Activated CD4-positive, alpha-beta memory T cell treated with anti-CD3 and anti-CD28 coated beads for 36 hours (primary cell): ENCODE measurements at regions of chr3 and their contacts with region 1.

Region 1: DNA sequence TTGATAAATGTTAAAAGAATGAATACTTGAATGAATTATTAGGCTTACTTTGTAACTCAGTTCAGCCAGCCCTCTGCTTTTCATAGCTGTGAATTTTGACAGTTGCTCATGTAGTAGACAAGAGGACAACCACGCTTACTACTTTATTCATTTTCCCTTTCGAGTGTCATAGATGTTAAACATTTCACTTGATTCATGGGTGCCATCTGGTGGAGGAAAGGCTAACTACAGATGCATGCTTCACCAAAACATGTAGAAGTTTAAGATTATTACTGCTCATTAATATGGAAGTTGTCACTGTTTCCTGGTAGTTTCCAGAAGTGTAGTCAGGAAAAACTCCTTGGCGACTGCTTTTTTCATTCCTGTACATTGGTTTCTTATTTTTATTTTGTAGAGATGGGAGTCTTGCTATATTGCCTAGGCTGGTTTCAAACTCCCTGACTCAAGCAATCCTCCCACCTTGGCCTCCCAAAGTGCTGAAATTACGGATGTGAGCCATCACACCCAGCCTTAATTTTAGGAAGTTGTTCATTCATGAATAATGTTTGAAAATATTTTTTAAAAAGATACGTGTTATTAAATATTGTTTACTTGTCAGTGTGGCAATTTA is 163.2 kb downstream of the B3GALNT1 start:
- DNase-seq: peak; percentile 70
- H3K4me3 Mint-ChIP-seq: no peak overlapping the region
- H3K27ac Mint-ChIP-seq: no peak overlapping the region
- H3K4me1 Mint-ChIP-seq: peaks cover 3% of the 10 kb centered on the region
- H3K27me3 Mint-ChIP-seq: no peaks in the 10 kb centered on the region

Region 2: GRCh38 chr3:160686955-160687535 is 254.9 kb before region 1 on chr3:
- CTCF ChIA-PET with region 1: interaction called, 35 read pairs
- POLR2A ChIA-PET with region 1: no interaction called
- intact Hi-C with region 1: loop called (anchors 1 kb)
- DNase-seq: no peak
- H3K4me3 Mint-ChIP-seq: no peak overlapping the region
- H3K27ac Mint-ChIP-seq: no peak overlapping the region
- H3K4me1 Mint-ChIP-seq: no peaks in the 10 kb centered on the region
- H3K27me3 Mint-ChIP-seq: no peaks in the 10 kb centered on the region

Region 3: GRCh38 chr3:160707187-160707794 is 234.7 kb before region 1 on chr3:
- CTCF ChIA-PET with region 1: interaction called, 63 read pairs
- POLR2A ChIA-PET with region 1: no interaction called
- intact Hi-C with region 1: loop called (anchors 1 kb)
- DNase-seq: no peak
- H3K4me3 Mint-ChIP-seq: no peak overlapping the region
- H3K27ac Mint-ChIP-seq: no peak overlapping the region
- H3K4me1 Mint-ChIP-seq: no peaks in the 10 kb centered on the region
- H3K27me3 Mint-ChIP-seq: peaks cover 31% of the 10 kb centered on the region

Region 4: DNA sequence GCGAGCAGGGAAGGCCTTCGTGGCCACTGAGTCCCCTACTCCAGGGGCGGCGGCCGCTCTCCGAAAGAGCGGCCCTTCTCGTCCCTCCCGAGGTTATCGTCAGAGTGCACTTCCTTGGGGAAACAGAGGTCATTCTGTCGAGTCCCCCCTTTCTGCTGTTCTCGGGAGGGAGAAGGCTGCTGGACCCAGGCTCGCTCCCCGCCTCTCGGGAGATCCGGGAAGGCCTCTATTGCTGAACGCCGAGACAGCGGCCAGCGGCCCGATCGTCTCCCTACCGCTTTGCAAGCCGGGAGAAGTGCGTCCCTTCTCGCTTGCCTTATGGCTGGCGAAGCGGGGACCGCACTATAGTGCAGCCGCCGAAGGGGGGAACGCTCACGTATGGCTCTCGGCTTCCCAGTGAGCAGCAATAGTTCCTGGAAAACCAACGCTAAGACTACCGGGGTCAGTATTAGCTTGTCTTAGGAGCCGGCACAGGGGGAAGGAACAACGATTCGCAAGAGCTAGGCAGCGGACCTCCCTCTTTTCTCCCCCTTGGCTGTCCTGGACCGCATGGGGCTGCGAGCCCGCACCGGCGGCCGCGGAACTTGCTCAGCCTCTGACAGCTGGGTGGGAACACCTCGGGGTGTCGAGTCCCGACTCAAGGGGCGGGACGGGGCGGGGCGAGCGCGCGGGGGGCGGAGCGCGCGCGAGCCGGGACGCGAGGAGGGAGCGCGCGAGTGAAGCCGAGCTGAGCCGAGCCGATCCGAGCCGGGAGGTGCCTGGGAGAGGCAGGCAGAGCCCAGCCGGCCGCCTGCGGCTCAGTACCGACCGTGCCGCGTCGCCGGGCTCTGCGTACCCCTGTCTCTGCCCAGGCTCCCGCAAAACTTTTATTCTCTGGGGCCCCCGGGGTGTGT is 186.9 kb before region 1 on chr3:
- CTCF ChIA-PET with region 1: interaction called, 8 read pairs
- POLR2A ChIA-PET with region 1: no interaction called
- intact Hi-C with region 1: loop called (anchors 2 kb)
- DNase-seq: peak; percentile 94
- H3K4me3 Mint-ChIP-seq: peak overlapping the region; percentile 95
- H3K27ac Mint-ChIP-seq: peak overlapping the region; percentile 90
- H3K4me1 Mint-ChIP-seq: peaks cover 26% of the 10 kb centered on the region
- H3K27me3 Mint-ChIP-seq: peaks cover 12% of the 10 kb centered on the region

Region 5: DNA sequence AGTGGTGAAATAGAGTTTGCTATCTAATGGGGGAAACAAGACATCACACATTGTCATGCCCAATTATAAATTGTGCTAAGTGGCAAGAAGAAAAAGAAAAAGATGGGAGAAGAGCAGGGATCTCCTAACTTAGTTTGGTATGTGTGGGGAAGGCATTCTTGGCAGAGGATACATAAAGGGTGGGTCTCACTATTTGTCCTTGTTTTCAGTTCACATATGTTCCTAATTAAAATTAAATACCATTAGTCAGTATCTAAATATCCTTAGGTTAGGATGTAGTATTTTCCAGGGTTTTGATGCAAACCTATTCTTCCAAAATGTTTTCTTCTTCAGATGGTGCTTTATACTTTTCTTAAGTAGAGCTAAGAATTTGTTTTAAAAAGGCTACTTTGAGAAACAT is 10.5 kb before region 1 on chr3:
- CTCF ChIA-PET with region 1: interaction called, 25 read pairs
- POLR2A ChIA-PET with region 1: no interaction called
- intact Hi-C with region 1: no loop called
- DNase-seq: no peak
- H3K4me3 Mint-ChIP-seq: no peak overlapping the region
- H3K27ac Mint-ChIP-seq: no peak overlapping the region
- H3K4me1 Mint-ChIP-seq: no peaks in the 10 kb centered on the region
- H3K27me3 Mint-ChIP-seq: no peaks in the 10 kb centered on the region